MCF 10A (cell line): ENCODE measurements at regions of chr7 and their contacts with region 1.

Region 1: DNA sequence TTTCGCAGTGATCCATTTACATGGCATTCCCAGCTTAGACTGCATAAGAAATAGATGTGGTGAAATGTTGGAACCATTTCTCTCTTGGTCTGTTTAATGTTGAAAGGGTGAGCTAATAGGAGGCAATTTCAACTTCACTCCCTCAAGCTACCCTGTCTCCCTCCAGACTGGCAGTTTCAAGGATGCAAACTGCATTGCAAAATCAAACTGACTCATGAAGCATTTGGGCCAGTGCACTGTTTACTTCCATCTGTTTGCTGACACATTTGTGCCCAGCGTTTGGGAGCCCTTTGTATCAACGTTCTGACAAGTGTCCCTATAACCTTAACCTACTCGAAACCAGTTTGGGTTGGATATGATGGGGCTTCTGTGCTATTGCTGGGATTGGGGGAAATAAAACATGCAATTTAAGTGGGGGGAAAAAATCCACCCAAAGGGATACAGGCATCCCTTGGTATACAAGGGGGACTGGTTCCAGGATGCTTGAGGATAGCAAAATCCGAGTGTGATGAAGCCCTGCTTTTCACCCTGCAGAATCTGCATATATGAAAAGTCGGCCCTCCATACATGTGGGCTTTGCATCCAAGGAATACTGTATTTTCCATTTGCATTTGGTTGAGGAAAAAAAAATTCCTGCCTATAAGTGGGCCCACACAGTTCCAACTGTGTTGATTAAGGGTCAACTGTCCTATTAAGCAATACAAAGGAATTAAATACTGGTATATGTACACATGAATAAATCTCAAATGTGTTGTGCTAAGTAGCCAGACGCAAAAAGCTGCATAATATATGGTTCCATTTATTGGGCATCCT is 15.6 kb downstream of the RHEB start:
- DNase-seq: peak; percentile 95
- H3K4me3 Mint-ChIP-seq: peak overlapping the region; percentile 48
- H3K27ac Mint-ChIP-seq: peak overlapping the region; percentile 58
- H3K4me1 Mint-ChIP-seq: peaks cover 18% of the 10 kb centered on the region
- H3K27me3 Mint-ChIP-seq: no peaks in the 10 kb centered on the region
- CTCF ChIP-seq: no peak

Region 2: DNA sequence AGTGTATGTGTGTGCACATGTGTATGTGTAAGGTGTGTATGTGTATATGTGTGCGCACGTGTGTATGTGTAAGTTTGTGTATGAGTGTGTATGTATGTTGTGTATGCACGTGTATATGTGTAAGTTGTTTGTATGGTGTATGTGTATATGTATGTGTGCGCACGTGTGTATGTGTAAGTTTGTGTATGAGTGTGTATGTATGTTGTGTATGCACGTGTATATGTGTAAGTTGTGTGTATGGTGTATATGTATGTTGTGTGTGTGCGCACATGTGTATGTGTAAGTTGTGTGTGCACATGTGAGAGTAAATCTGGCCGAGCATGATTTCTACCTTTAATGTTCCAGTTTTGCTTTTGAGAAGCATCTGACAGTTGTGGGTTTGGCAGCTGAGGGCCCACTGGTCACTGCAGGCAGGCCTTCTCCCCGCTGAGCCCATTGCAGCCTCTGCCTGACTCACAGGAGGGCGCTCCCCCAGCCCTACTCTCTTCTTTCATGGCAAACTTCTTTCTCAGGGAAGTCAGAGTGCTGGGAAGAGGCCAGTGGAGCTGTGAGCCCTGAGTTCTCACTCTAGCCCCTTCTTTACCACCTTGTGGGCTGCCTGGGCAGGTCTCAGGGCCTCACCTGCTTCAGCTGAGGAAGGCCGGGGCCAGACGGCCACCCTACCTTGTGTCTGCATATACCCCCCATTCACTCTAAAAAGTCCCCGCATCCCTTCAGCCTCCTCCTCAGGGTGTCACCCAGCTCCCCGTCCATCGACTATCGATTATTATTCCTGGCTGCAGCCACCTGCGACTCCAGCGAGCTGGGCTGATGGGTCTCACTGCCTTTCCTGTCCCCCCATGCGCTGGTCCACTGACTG is 105.4 kb before region 1 on chr7:
- CTCF ChIA-PET with region 1: no interaction called
- POLR2A ChIA-PET with region 1: no interaction called
- intact Hi-C with region 1: no loop called
- DNase-seq: no peak
- H3K4me3 Mint-ChIP-seq: no peak overlapping the region
- H3K27ac Mint-ChIP-seq: no peak overlapping the region
- H3K4me1 Mint-ChIP-seq: peaks cover 2% of the 10 kb centered on the region
- H3K27me3 Mint-ChIP-seq: peaks cover under 1% of the 10 kb centered on the region
- CTCF ChIP-seq: no peak

Region 3: DNA sequence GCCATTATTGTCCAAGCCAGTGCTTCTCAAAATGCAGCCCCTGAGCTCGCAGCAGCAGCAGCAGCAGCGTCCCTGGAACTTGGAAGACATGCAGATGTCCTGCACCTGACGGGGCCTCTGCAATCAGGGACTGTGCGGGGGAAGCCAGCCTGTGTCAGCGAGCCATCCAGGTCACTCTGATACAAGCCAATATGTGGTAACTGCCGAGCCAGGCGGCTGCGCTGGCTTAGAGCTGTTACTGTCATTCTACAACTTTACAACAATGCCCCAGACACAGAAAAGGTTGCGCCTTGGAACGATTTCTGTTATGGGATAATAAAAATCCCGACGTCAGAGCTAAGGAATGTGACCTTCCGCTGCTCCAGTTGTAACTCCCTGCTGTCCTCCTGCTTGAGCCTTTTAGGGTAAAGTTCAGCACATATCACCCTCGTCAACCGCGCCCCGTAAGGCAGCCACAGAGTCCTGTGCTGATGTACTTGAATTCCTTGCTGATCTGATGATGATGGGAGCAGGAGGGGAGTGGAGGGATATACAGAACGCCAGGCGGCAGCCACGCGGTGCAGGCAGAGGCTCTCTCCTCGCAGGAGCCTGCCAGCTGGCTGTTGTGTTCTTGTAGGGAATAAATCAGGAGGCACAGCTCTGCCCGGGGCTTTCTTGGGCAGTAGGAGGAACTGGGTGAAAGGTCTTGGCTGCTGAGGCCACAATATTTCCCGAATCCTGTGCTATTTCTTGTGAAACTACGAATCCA is 44.2 kb before region 1 on chr7:
- CTCF ChIA-PET with region 1: interaction called, 12 read pairs
- POLR2A ChIA-PET with region 1: interaction called, 5 read pairs
- intact Hi-C with region 1: no loop called
- DNase-seq: peak; percentile 85
- H3K4me3 Mint-ChIP-seq: peak overlapping the region; percentile 65
- H3K27ac Mint-ChIP-seq: peak overlapping the region; percentile 76
- H3K4me1 Mint-ChIP-seq: peaks cover 16% of the 10 kb centered on the region
- H3K27me3 Mint-ChIP-seq: no peaks in the 10 kb centered on the region
- CTCF ChIP-seq: peak; percentile 24

Region 4: DNA sequence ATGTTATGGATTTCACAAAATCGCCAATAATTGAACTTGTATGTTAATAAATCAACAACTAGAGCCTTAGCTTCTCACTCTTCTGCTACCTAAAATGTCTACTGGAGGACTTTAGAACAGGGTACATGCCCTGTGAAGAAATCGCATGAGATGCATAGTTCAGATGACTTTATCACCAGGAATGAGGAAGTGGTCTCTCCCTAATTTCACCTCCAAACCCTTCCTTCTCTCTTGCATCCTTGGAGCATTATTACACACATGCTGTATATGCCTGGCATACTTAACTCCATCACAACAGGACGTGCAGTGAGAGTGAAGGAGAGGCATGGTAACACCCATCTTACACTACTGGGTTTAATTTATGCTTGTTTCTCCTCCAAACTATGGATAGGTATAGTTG is 12.2 kb before region 1 on chr7:
- CTCF ChIA-PET with region 1: interaction called, 5 read pairs
- POLR2A ChIA-PET with region 1: interaction called, 25 read pairs
- intact Hi-C with region 1: no loop called
- DNase-seq: peak; percentile 86
- H3K4me3 Mint-ChIP-seq: no peak overlapping the region
- H3K27ac Mint-ChIP-seq: peak overlapping the region; percentile 85
- H3K4me1 Mint-ChIP-seq: peaks cover 20% of the 10 kb centered on the region
- H3K27me3 Mint-ChIP-seq: no peaks in the 10 kb centered on the region
- CTCF ChIP-seq: no peak

Region 5: GRCh38 chr7:151590851-151591771 is 87.0 kb after region 1 on chr7:
- CTCF ChIA-PET with region 1: no interaction called
- POLR2A ChIA-PET with region 1: no interaction called
- intact Hi-C with region 1: no loop called
- DNase-seq: no peak
- H3K4me3 Mint-ChIP-seq: no peak overlapping the region
- H3K27ac Mint-ChIP-seq: no peak overlapping the region
- H3K4me1 Mint-ChIP-seq: peaks cover 24% of the 10 kb centered on the region
- H3K27me3 Mint-ChIP-seq: no peaks in the 10 kb centered on the region
- CTCF ChIP-seq: no peak

Region 6: GRCh38 chr7:151696721-151697514 is 192.8 kb after region 1 on chr7:
- CTCF ChIA-PET with region 1: no interaction called
- POLR2A ChIA-PET with region 1: no interaction called
- intact Hi-C with region 1: no loop called
- DNase-seq: peak; percentile 87
- H3K4me3 Mint-ChIP-seq: no peak overlapping the region
- H3K27ac Mint-ChIP-seq: peak overlapping the region; percentile 26
- H3K4me1 Mint-ChIP-seq: peaks cover 34% of the 10 kb centered on the region
- H3K27me3 Mint-ChIP-seq: no peaks in the 10 kb centered on the region
- CTCF ChIP-seq: no peak